Aorta (tissue), 5 donors: ENCODE measurements at regions of chr3 and their contacts with region 1.

Region 1: GRCh38 chr3:67113802-67114407 is 115.8 kb downstream of the KBTBD8 start:
- DNase-seq: peak; percentile 77 to 88
- ATAC-seq: peak; percentile 83
- H3K4me3 ChIP-seq: no peak overlapping the region
- H3K27ac ChIP-seq: no peak overlapping the region
- H3K4me1 ChIP-seq: no peaks in the 10 kb centered on the region
- H3K27me3 ChIP-seq: no peaks in the 10 kb centered on the region

Region 2: DNA sequence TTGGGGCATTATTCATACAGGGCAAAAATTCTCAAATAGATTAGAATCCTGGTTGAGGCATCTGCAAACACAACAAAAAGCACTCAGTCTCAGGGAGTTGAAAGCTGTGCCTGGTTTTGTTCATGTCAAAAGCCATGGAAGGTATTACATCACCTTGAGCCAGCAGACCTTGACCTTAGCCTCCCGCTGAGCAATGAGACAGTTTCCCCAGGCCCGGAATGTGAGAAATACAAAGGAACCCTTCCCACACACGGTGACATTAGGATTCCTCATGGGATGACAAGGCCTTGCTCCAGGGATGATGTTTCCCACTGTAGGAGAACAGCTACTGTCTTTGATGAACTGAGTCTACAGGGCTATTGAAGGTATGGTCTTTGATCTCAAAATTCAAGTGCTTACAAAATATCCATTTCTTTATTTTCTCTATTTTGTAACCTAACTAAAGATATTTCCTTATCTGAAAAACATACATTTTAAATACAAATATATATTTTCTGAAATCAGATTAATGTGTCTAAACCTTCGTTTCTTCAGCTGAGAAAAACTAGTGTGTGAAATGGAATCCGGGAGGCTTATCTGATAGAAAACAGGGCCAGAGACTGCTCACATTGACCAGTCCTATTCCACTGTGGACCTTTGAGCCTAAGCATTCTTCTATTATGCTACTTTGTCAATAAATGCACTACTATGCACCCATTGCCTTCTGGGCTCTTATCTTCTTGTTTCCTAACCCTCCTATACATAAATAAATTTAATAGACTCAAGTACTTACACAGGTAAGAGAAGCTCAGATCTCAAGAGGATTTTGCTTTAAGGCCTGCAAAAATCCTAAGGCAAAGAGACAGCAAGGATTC is 182.4 kb after region 1 on chr3:
- intact Hi-C with region 1: no loop called
- DNase-seq: no peak
- ATAC-seq: no peak
- H3K4me3 ChIP-seq: no peak overlapping the region
- H3K27ac ChIP-seq: no peak overlapping the region
- H3K4me1 ChIP-seq: peaks cover 0 to 12% of the 10 kb centered on the region in 2 donors
- H3K27me3 ChIP-seq: peaks cover 0 to 1% of the 10 kb centered on the region in 2 donors

Region 3: GRCh38 chr3:67605377-67605776 is 491.5 kb after region 1 on chr3:
- intact Hi-C with region 1: loop called in 1 of 2 experiments (anchors 10 kb)
- DNase-seq: no peak
- ATAC-seq: peak; percentile 44
- H3K4me3 ChIP-seq: no peak overlapping the region
- H3K27ac ChIP-seq: no peak overlapping the region
- H3K4me1 ChIP-seq: peaks cover 0 to 3% of the 10 kb centered on the region in 2 donors
- H3K27me3 ChIP-seq: no peaks in the 10 kb centered on the region

Region 4: DNA sequence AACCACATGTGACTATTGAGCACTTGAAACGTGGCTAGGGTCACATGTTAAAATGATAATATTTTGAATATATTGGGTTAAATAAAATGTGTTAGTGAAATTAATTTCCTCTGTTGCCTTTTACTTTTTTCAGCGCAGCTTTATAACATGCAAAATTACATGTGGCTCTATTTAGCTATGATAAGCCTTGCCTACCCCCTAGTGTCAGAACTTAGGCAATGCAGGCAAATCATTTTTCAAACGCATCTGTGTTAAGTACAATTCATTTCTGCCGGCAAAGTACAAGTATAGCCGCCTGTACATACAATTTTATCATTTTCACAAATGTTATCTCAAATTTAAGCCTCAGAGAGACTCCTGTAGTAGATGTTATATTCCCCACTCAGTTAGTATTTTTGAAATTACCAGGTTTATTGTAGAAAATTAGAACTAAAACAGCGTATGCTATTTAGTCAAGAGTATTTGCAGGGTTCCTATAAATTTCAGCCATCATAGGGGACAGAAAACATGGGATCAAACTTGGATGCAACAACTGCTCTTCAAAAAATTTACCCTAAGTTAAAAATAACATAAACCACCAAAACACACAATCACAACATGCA is 1762.3 kb after region 1 on chr3:
- intact Hi-C with region 1: loop called in 1 of 2 experiments (anchors 10 kb)
- DNase-seq: no peak
- ATAC-seq: peak; percentile 71
- H3K4me3 ChIP-seq: no peak overlapping the region
- H3K27ac ChIP-seq: no peak overlapping the region
- H3K4me1 ChIP-seq: no peaks in the 10 kb centered on the region
- H3K27me3 ChIP-seq: no peaks in the 10 kb centered on the region

Region 5: GRCh38 chr3:68893600-68894239 is 1779.8 kb after region 1 on chr3:
- intact Hi-C with region 1: loop called in 1 of 2 experiments (anchors 5 kb)
- DNase-seq: no peak
- ATAC-seq: no peak
- H3K4me3 ChIP-seq: no peak overlapping the region
- H3K27ac ChIP-seq: no peak overlapping the region
- H3K4me1 ChIP-seq: no peaks in the 10 kb centered on the region
- H3K27me3 ChIP-seq: no peaks in the 10 kb centered on the region